Vagina (tissue), 2 donors: ENCODE measurements at regions of chr4 and their contacts with region 1.

Region 1: GRCh38 chr4:84041426-84041825 is 457.7 kb downstream of the NKX6-1 start:
- DNase-seq: no peak
- H3K4me3 ChIP-seq: no peak overlapping the region
- H3K27ac ChIP-seq: no peak overlapping the region
- H3K4me1 ChIP-seq: no peaks in the 10 kb centered on the region
- H3K27me3 ChIP-seq: no peaks in the 10 kb centered on the region
- CTCF ChIP-seq: no peak
- POLR2A ChIP-seq: no peak

Region 2: DNA sequence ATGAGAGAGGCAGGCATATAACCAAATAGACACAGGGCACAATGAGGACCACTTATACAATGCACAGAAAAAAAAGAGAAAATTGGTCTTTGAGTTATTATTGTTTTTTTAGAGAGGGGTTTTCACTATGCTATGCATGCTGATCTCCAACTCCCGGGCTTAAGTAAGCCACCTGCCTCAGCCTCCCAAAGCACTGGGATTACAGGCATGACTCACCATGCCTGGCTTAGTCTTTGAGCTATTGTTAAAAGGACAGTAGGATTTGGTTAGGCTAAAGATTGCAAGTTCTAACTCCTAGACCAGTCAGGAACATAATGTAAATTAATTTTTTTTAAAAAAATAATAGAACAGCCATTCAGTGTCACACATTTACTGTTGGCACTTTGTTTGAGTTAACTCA is 165.4 kb before region 1 on chr4:
- intact Hi-C with region 1: no loop called
- DNase-seq: no peak
- H3K4me3 ChIP-seq: no peak overlapping the region
- H3K27ac ChIP-seq: no peak overlapping the region
- H3K4me1 ChIP-seq: no peaks in the 10 kb centered on the region
- H3K27me3 ChIP-seq: no peaks in the 10 kb centered on the region
- CTCF ChIP-seq: no peak
- POLR2A ChIP-seq: no peak

Region 3: DNA sequence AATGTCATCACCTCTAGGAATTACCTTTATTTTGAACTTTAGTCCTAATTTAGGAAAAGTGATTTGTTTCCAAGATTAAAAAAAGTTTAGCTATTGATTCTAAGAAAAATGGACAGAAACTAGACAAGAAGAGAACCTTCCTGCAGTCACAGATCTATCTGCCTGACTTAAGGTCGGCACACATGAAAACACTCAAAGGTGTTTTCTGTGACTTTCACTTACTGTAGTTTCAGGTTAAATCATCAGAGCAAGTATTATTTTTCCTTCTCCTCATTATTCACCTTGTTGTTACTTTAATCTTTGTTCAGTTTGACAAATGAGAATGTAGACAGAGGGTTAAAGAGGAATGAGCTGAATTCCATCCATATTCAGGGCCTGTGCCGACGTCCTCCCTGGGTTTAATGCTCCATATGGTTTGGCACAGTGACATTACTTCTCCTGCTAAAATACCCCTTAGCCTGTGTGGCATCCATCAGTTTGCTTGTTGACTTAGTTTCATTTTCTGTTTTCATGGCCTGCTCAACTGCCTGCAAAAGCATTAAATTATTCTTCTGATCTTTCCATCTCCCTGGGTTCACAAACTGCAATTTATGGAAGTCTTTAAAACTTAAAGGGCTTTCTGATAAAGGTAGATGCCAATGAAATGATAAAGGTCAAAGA is 105.0 kb after region 1 on chr4:
- intact Hi-C with region 1: no loop called
- DNase-seq: no peak
- H3K4me3 ChIP-seq: no peak overlapping the region
- H3K27ac ChIP-seq: no peak overlapping the region
- H3K4me1 ChIP-seq: no peaks in the 10 kb centered on the region
- H3K27me3 ChIP-seq: no peaks in the 10 kb centered on the region
- CTCF ChIP-seq: no peak
- POLR2A ChIP-seq: no peak

Region 4: DNA sequence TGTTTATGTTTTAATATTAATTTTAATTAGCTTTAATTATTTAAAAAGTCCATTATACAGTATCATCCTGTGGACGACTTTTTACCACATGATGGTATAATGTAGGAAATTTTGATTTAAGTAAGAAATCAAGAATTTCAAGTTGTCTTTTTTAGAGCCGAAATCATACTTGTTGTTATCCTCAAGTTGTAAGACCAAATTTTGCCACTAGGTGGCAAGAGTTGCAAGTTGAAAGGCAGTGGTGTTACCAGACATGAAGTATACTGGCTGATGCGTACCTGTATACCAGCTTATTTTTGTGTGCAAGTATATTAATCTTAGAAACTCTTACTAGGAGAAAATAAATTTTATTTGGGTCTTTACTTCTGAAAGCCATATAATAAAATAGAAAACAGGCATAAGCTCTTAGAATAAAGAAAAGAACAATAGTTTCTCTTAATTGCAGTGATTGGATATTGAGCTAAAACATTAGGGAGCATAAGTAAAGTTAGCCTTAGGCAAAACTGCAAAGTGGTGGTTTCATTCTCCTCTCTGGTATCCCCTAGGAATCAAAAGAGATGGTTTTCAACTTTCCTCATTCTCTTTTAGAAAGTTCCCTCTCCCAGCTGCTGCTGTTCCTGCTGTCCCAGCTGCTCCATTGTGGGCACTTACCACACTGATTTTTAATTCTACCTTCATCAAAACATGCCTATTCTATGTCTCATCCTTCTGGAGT is 1043.1 kb after region 1 on chr4:
- intact Hi-C with region 1: loop called (anchors 10 kb)
- DNase-seq: no peak
- H3K4me3 ChIP-seq: no peak overlapping the region
- H3K27ac ChIP-seq: no peak overlapping the region
- H3K4me1 ChIP-seq: no peaks in the 10 kb centered on the region
- H3K27me3 ChIP-seq: no peaks in the 10 kb centered on the region
- CTCF ChIP-seq: peak in 1 of 3 experiments; percentile 41
- POLR2A ChIP-seq: no peak